RWPE1 (cell line): ENCODE measurements at regions of chr17 and their contacts with region 1.

Region 1: DNA sequence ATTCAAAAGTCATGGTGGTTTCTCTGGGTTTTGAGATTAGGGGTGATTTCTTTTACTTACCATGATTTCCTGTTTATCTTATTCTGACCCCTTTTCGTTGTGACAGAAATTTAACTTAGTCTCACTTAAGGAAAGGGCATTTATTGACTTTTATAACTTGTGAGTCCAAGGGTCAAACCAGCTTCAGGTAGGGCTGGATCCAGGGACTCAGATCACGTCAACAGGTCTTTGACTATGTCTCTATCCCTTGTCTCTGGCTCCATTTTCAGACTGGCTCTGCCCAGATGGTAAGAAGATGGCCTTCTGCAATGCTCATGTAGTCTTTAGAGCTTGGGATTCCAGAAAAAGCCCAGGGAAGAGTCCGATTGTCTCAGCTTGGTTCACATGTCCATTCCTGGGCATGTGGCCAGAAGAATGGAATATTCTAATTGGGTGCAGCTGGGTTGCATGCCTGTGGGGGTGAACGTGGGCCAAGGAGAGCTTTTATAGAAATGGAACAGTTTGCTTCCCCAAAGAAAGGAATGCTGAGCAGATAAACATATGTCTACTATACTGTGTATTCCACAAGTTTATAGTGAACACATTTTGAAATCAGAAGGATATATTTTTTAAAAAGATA is 13.4 kb downstream of the USP43 start:
- DNase-seq: no peak
- H3K27ac ChIP-seq: no peak overlapping the region
- CTCF ChIP-seq: no peak

Region 2: GRCh38 chr17:9644910-9645751 is 13.6 kb before region 1 on chr17 and contains the start of gene USP43:
- CTCF ChIA-PET with region 1: no interaction called
- POLR2A ChIA-PET with region 1: interaction called, 10 read pairs
- DNase-seq: peak; percentile 84
- H3K27ac ChIP-seq: peak within 1 kb of the TSS; percentile 80
- CTCF ChIP-seq: 0 out of 2 replicates have a peak, but pooled peaks have one; percentile 6